CD8-positive, alpha-beta T cell (primary cell): ENCODE measurements at regions of chr7 and their contacts with region 1.

Region 1: GRCh38 chr7:104983578-104984539 is 30.1 kb upstream of the KMT2E start:
- DNase-seq: peak; percentile 64 to 91 (median 85)
- ATAC-seq: peak; percentile 83
- H3K4me3 ChIP-seq: peak overlapping the region; percentile 67 to 85
- H3K4me3 Mint-ChIP-seq: peak overlapping the region; percentile 100
- H3K27ac ChIP-seq: peak overlapping the region; percentile 95
- H3K27ac Mint-ChIP-seq: peak overlapping the region; percentile 100
- H3K4me1 ChIP-seq: peaks cover 42% of the 10 kb centered on the region
- H3K4me1 Mint-ChIP-seq: peaks cover 55% of the 10 kb centered on the region
- H3K27me3 ChIP-seq: no peaks in the 10 kb centered on the region
- H3K27me3 Mint-ChIP-seq: no peaks in the 10 kb centered on the region
- CTCF ChIP-seq: peak; percentile 51

Region 2: GRCh38 chr7:104499227-104499626 is 484.6 kb before region 1 on chr7:
- CTCF ChIA-PET with region 1: no interaction called
- POLR2A ChIA-PET with region 1: no interaction called
- intact Hi-C with region 1: no loop called
- DNase-seq: no peak
- ATAC-seq: no peak
- H3K4me3 ChIP-seq: no peak overlapping the region
- H3K4me3 Mint-ChIP-seq: no peak overlapping the region
- H3K27ac ChIP-seq: no peak overlapping the region
- H3K27ac Mint-ChIP-seq: no peak overlapping the region
- H3K4me1 ChIP-seq: no peaks in the 10 kb centered on the region
- H3K4me1 Mint-ChIP-seq: no peaks in the 10 kb centered on the region
- H3K27me3 ChIP-seq: no peaks in the 10 kb centered on the region
- H3K27me3 Mint-ChIP-seq: no peaks in the 10 kb centered on the region
- CTCF ChIP-seq: no peak

Region 3: DNA sequence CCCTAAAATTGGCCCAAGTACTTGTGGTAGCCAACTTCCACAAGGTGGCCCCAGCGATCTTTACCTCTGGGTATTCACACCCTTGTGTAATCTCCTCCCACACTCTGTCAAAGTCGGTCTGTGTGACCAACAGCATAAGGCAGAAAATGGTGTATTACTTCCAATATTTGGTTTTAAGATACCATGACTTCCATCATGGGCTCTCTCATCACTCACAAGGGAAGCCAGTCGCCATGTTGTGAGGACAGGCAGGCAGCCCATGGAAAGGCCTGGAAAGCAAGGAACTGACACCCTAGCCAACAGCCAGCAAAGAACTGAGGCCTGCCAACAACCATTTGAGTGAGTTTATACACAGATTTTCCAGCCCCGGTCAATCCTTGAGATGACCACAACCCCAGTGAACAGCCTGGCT is 60.8 kb before region 1 on chr7:
- CTCF ChIA-PET with region 1: interaction called, 17 read pairs
- POLR2A ChIA-PET with region 1: interaction called, 4 read pairs
- intact Hi-C with region 1: loop called (anchors 1 kb)
- DNase-seq: peak; percentile 54 to 88 (median 72)
- ATAC-seq: peak; percentile 96
- H3K4me3 ChIP-seq: no peak overlapping the region
- H3K4me3 Mint-ChIP-seq: no peak overlapping the region
- H3K27ac ChIP-seq: no peak overlapping the region
- H3K27ac Mint-ChIP-seq: peak overlapping the region; percentile 55
- H3K4me1 ChIP-seq: no peaks in the 10 kb centered on the region
- H3K4me1 Mint-ChIP-seq: peaks cover 5% of the 10 kb centered on the region
- H3K27me3 ChIP-seq: no peaks in the 10 kb centered on the region
- H3K27me3 Mint-ChIP-seq: no peaks in the 10 kb centered on the region
- CTCF ChIP-seq: peak; percentile 66

Region 4: GRCh38 chr7:105003275-105003674 is 19.4 kb after region 1 on chr7:
- CTCF ChIA-PET with region 1: interaction called, 33 read pairs
- POLR2A ChIA-PET with region 1: interaction called, 10 read pairs
- intact Hi-C with region 1: loop called in 1 of 2 experiments (anchors 2 kb)
- DNase-seq: peak in 4 of 9 experiments; percentile 49 to 63 (median 54)
- ATAC-seq: peak; percentile 84
- H3K4me3 ChIP-seq: no peak overlapping the region
- H3K4me3 Mint-ChIP-seq: peak overlapping the region; percentile 71
- H3K27ac ChIP-seq: peak overlapping the region in 1 of 2 experiments; percentile 65
- H3K27ac Mint-ChIP-seq: peak overlapping the region; percentile 91
- H3K4me1 ChIP-seq: peaks cover 79% of the 10 kb centered on the region
- H3K4me1 Mint-ChIP-seq: peaks cover 85% of the 10 kb centered on the region
- H3K27me3 ChIP-seq: no peaks in the 10 kb centered on the region
- H3K27me3 Mint-ChIP-seq: no peaks in the 10 kb centered on the region
- CTCF ChIP-seq: no peak

Region 5: GRCh38 chr7:105046414-105046813 is 62.6 kb after region 1 on chr7:
- CTCF ChIA-PET with region 1: interaction called, 82 read pairs
- POLR2A ChIA-PET with region 1: interaction called, 5 read pairs
- intact Hi-C with region 1: loop called (anchors 1 kb)
- DNase-seq: no peak
- ATAC-seq: no peak
- H3K4me3 ChIP-seq: no peak overlapping the region
- H3K4me3 Mint-ChIP-seq: no peak overlapping the region
- H3K27ac ChIP-seq: no peak overlapping the region
- H3K27ac Mint-ChIP-seq: no peak overlapping the region
- H3K4me1 ChIP-seq: peaks cover 5% of the 10 kb centered on the region
- H3K4me1 Mint-ChIP-seq: peaks cover 67% of the 10 kb centered on the region
- H3K27me3 ChIP-seq: no peaks in the 10 kb centered on the region
- H3K27me3 Mint-ChIP-seq: no peaks in the 10 kb centered on the region
- CTCF ChIP-seq: no peak

Region 6: GRCh38 chr7:105098863-105099515 is 115.1 kb after region 1 on chr7:
- CTCF ChIA-PET with region 1: interaction called, 4 read pairs
- POLR2A ChIA-PET with region 1: no interaction called
- intact Hi-C with region 1: loop called in 1 of 2 experiments (anchors 5 kb)
- DNase-seq: no peak
- ATAC-seq: no peak
- H3K4me3 ChIP-seq: no peak overlapping the region
- H3K4me3 Mint-ChIP-seq: no peak overlapping the region
- H3K27ac ChIP-seq: peak overlapping the region in 1 of 2 experiments; percentile 10
- H3K27ac Mint-ChIP-seq: no peak overlapping the region
- H3K4me1 ChIP-seq: no peaks in the 10 kb centered on the region
- H3K4me1 Mint-ChIP-seq: peaks cover 45% of the 10 kb centered on the region
- H3K27me3 ChIP-seq: no peaks in the 10 kb centered on the region
- H3K27me3 Mint-ChIP-seq: no peaks in the 10 kb centered on the region
- CTCF ChIP-seq: no peak

Region 7: GRCh38 chr7:105224884-105225651 is 241.2 kb after region 1 on chr7:
- CTCF ChIA-PET with region 1: no interaction called
- POLR2A ChIA-PET with region 1: no interaction called
- intact Hi-C with region 1: no loop called
- DNase-seq: peak in 2 of 9 experiments; percentile 15 to 32
- ATAC-seq: peak; percentile 46
- H3K4me3 ChIP-seq: no peak overlapping the region
- H3K4me3 Mint-ChIP-seq: no peak overlapping the region
- H3K27ac ChIP-seq: no peak overlapping the region
- H3K27ac Mint-ChIP-seq: no peak overlapping the region
- H3K4me1 ChIP-seq: peaks cover 8% of the 10 kb centered on the region
- H3K4me1 Mint-ChIP-seq: peaks cover 34% of the 10 kb centered on the region
- H3K27me3 ChIP-seq: no peaks in the 10 kb centered on the region
- H3K27me3 Mint-ChIP-seq: no peaks in the 10 kb centered on the region
- CTCF ChIP-seq: no peak

Region 8: DNA sequence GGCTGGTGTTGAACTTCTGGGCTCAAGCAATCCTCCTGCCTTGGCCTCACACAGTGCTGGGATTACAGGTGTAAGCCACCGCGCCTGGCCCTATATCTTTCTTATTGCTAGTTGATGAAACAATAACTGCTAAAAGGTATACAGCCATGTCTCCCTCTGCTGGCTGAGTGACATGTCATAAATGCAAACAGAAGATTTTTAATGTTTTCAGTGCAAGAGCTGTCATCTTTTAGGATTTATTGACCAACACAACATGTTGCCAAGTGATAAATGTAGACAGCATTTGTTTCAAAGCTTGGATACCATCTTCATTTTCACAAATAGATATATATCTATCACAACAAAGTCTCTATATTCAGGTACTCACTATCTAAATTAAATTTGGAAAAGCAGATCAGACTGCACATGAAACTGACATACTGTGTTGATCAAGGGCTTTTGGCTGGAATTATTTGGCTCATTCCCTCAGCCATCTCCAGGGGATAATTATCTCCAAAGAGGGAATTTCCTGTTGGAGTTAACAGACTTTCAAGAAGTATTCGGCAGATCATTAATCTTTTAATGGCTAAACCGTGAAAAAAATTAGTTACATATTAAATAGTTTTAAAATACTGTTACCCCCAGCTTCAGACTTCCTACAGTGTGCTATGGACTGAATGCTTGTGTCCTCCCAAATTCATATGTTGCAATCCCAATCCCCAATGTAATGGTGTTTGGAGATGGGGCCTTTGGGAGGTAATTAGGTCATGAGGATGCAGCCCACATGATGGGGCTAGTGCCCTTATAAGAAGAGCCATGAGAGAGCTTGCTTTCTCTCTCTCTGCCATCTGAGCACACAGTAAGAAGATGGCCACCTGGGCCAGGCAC is 446.1 kb after region 1 on chr7:
- CTCF ChIA-PET with region 1: interaction called, 5 read pairs
- POLR2A ChIA-PET with region 1: interaction called, 3 read pairs
- intact Hi-C with region 1: loop called in 1 of 2 experiments (anchors 1 kb)
- DNase-seq: peak; percentile 12 to 75 (median 53)
- ATAC-seq: peak; percentile 61
- H3K4me3 ChIP-seq: no peak overlapping the region
- H3K4me3 Mint-ChIP-seq: no peak overlapping the region
- H3K27ac ChIP-seq: no peak overlapping the region
- H3K27ac Mint-ChIP-seq: no peak overlapping the region
- H3K4me1 ChIP-seq: no peaks in the 10 kb centered on the region
- H3K4me1 Mint-ChIP-seq: no peaks in the 10 kb centered on the region
- H3K27me3 ChIP-seq: no peaks in the 10 kb centered on the region
- H3K27me3 Mint-ChIP-seq: no peaks in the 10 kb centered on the region
- CTCF ChIP-seq: peak; percentile 45